Endothelial cell of umbilical vein (primary cell): ENCODE measurements at regions of chr12 and their contacts with region 1.

Region 1: DNA sequence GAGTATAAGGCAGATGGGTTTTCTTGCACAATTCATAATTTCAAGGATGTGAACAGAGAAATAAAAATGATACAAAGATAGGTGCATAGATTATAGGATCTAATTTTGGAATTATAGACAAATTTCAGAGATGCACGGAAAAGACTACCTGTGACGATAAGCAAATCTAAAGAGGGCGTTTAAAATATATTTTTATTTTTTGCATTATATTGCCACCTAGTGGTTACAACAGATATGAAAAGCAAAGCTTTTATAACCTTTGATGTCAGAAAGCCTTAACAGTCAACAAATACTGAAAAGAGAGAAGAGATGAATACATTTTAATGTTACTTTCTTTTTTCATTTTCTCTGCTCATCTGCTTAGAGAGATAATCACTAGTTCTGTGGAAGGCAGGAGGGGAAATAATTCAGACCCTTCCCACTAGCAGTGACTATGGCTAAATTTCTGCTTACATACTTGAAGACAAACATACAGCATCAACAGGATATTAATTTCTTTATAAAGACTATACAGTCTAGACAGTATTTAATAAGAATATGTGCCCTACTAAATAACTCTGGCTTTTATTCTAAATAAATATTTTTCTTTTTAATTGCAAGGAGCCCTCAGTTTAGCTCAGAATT is 46.3 kb downstream of the NTS start:
- DNase-seq: peak; percentile 53
- H3K4me3 ChIP-seq: no peak overlapping the region
- H3K27ac ChIP-seq: no peak overlapping the region
- H3K4me1 ChIP-seq: no peaks in the 10 kb centered on the region
- H3K27me3 ChIP-seq: no peaks in the 10 kb centered on the region
- CTCF ChIP-seq: peak; percentile 20 to 27
- POLR2A ChIP-seq: no peak

Region 2: DNA sequence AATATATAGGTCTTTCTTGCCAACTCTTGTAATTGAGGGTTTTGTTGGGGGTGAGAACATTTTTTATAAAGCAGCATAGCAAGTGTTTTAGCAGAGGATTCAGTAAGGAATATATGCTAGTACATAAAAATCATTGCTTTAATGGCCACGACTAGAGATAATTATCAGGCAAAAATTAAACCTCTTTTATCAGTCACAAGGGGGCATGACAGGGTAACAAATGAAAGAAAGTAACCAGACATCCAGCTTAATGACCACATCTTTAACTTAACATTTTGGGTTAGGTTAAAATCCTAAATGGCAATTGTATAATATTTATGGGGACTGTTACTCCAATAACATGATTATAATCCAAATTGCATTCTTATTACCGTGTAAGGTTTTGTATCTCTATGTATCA is 764.6 kb before region 1 on chr12:
- CTCF ChIA-PET with region 1: interaction called, 5 read pairs
- POLR2A ChIA-PET with region 1: no interaction called
- dilution Hi-C with region 1: no loop called
- intact Hi-C with region 1: loop called (anchors 2 kb)
- DNase-seq: peak; percentile 67
- H3K4me3 ChIP-seq: no peak overlapping the region
- H3K27ac ChIP-seq: no peak overlapping the region
- H3K4me1 ChIP-seq: no peaks in the 10 kb centered on the region
- H3K27me3 ChIP-seq: no peaks in the 10 kb centered on the region
- CTCF ChIP-seq: peak in 1 of 2 donors; percentile 31
- POLR2A ChIP-seq: no peak

Region 3: DNA sequence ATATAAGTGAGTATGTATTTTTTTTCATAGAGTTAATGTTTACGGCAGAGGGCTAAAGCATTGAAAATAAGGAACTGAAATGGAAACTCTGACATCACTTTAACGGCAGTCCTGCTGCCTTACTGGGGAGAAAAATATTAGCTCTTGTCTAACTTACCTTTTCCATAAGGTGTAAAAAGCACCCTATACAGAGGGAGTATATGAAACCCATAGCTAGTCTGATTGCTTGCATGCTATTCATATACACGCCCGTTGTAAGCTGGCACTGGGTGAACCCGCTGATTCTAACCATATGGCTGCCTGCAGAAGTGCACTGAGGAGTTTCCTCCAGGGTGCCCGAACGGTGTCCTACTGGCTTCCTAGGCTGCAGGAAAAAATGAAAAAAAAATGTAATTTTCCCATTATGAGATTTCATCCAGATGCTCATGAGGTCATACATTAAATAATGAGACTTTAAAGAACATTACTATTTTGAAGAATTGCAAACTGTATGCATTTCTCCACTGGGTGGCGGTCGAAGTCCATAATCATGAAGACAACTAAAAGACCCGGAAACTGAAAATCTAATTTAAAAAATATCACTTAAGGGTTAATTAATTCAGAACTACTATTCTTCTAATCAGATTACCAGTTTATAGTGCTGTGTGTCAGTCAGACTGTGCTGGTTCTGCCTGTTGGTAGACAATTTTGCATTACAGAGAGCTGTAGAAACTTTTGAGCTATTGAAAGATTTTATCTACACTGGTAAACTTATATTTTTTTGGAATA is 495.7 kb before region 1 on chr12:
- CTCF ChIA-PET with region 1: interaction called, 20 read pairs
- POLR2A ChIA-PET with region 1: no interaction called
- dilution Hi-C with region 1: no loop called
- intact Hi-C with region 1: no loop called
- DNase-seq: peak; percentile 31
- H3K4me3 ChIP-seq: no peak overlapping the region
- H3K27ac ChIP-seq: no peak overlapping the region
- H3K4me1 ChIP-seq: no peaks in the 10 kb centered on the region
- H3K27me3 ChIP-seq: no peaks in the 10 kb centered on the region
- CTCF ChIP-seq: peak; percentile 24
- POLR2A ChIP-seq: no peak

Region 4: GRCh38 chr12:85476756-85477155 is 443.7 kb before region 1 on chr12:
- CTCF ChIA-PET with region 1: interaction called, 64 read pairs
- POLR2A ChIA-PET with region 1: no interaction called
- dilution Hi-C with region 1: no loop called
- intact Hi-C with region 1: loop called (anchors 1 kb)
- DNase-seq: no peak
- H3K4me3 ChIP-seq: no peak overlapping the region
- H3K27ac ChIP-seq: no peak overlapping the region
- H3K4me1 ChIP-seq: no peaks in the 10 kb centered on the region
- H3K27me3 ChIP-seq: no peaks in the 10 kb centered on the region
- CTCF ChIP-seq: no peak
- POLR2A ChIP-seq: no peak

Region 5: GRCh38 chr12:85872497-85873091 is 47.8 kb before region 1 on chr12:
- CTCF ChIA-PET with region 1: interaction called, 26 read pairs
- POLR2A ChIA-PET with region 1: no interaction called
- dilution Hi-C with region 1: no loop called
- intact Hi-C with region 1: loop called (anchors 1 kb)
- DNase-seq: peak; percentile 66
- H3K4me3 ChIP-seq: no peak overlapping the region
- H3K27ac ChIP-seq: no peak overlapping the region
- H3K4me1 ChIP-seq: no peaks in the 10 kb centered on the region
- H3K27me3 ChIP-seq: no peaks in the 10 kb centered on the region
- CTCF ChIP-seq: peak; percentile 46 to 52
- POLR2A ChIP-seq: no peak

Region 6: DNA sequence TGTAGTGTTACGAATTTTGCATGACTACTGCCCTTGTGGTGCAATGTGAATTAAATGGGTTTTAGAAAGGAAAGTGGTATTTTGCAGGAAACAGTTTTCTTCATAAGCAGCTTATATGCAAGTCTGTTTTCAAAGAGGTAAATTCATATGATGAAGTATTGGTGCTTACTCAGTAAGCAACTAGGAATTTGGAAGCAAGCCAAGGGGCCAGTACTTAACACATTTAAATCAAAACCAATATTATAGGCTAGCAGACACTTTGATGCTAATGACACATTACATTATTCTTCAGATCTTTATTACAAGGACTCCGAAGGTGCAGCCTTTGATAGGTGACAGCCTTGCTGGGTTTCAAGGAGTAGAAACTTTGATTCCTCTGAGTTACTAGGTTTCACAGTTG is 312.7 kb after region 1 on chr12:
- CTCF ChIA-PET with region 1: no interaction called
- POLR2A ChIA-PET with region 1: no interaction called
- dilution Hi-C with region 1: no loop called
- intact Hi-C with region 1: loop called (anchors 2 kb)
- DNase-seq: peak; percentile 49
- H3K4me3 ChIP-seq: no peak overlapping the region
- H3K27ac ChIP-seq: no peak overlapping the region
- H3K4me1 ChIP-seq: peaks cover 32% of the 10 kb centered on the region
- H3K27me3 ChIP-seq: no peaks in the 10 kb centered on the region
- CTCF ChIP-seq: no peak
- POLR2A ChIP-seq: no peak

Region 7: GRCh38 chr12:87848248-87848868 is 1927.9 kb after region 1 on chr12:
- CTCF ChIA-PET with region 1: interaction called, 8 read pairs
- POLR2A ChIA-PET with region 1: no interaction called
- dilution Hi-C with region 1: no loop called
- intact Hi-C with region 1: loop called (anchors 10 kb)
- DNase-seq: peak; percentile 73
- H3K4me3 ChIP-seq: no peak overlapping the region
- H3K27ac ChIP-seq: no peak overlapping the region
- H3K4me1 ChIP-seq: no peaks in the 10 kb centered on the region
- H3K27me3 ChIP-seq: no peaks in the 10 kb centered on the region
- CTCF ChIP-seq: peak; percentile 54 to 71
- POLR2A ChIP-seq: no peak